Kidney (tissue), 22 donors: ENCODE measurements at regions of chr2 and their contacts with region 1.

Region 1: GRCh38 chr2:157777427-157777826 is 98.7 kb downstream of the ACVR1 start:
- DNase-seq: peak in 3 of 5 donors; percentile 50 to 69 (median 60)
- H3K4me3 ChIP-seq: no peak overlapping the region
- H3K27ac ChIP-seq: no peak overlapping the region
- H3K4me1 ChIP-seq: peaks cover 0 to 9% (median 0%) of the 10 kb centered on the region in 3 donors
- H3K27me3 ChIP-seq: no peaks in the 10 kb centered on the region
- CTCF ChIP-seq: peak; percentile 69

Region 2: DNA sequence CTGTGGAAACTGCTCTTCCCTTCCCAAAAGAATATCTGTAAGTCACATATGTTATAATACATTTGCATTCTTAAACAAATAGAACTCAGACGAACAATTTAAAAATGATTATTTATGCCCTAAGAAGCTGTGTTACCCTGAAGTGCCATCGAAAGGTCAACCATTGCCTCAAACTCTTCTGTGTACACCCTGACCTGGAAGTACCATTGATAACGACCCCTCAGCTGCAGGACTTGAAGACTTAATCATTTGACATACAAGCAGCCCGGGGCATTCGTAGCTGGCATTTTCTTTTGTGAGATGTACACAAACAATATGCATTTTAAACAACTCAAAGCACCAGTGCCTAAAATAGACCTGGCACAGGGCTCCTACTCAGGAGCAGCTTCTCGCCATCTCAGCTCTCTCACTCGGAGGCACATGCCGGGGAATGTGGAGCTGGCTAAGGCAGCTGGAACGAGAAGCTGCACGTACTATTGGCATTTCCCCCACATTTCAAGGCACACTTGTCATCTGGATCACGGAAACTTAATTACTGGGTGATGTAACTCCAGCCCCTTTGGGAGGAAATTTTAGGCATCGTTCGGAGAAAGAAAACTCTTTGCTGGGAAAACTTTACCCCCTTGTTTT is 689.9 kb before region 1 on chr2:
- intact Hi-C with region 1: no loop called
- DNase-seq: no peak
- H3K4me3 ChIP-seq: no peak overlapping the region
- H3K27ac ChIP-seq: no peak overlapping the region
- H3K4me1 ChIP-seq: no peaks in the 10 kb centered on the region
- H3K27me3 ChIP-seq: no peaks in the 10 kb centered on the region
- CTCF ChIP-seq: no peak

Region 3: GRCh38 chr2:158011055-158011771 is 233.8 kb after region 1 on chr2:
- intact Hi-C with region 1: loop called (anchors 10 kb)
- DNase-seq: no peak
- H3K4me3 ChIP-seq: no peak overlapping the region
- H3K27ac ChIP-seq: no peak overlapping the region
- H3K4me1 ChIP-seq: no peaks in the 10 kb centered on the region
- H3K27me3 ChIP-seq: no peaks in the 10 kb centered on the region
- CTCF ChIP-seq: no peak